H1 (cell line): ENCODE measurements at regions of chr11 and their contacts with region 1.

Region 1: GRCh38 chr11:111777094-111778046 is 11.2 kb upstream of the PPP2R1B start:
- DNase-seq: no peak
- H3K4me3 ChIP-seq: no peak overlapping the region
- H3K27ac ChIP-seq: no peak overlapping the region
- H3K4me1 ChIP-seq: no peaks in the 10 kb centered on the region
- H3K27me3 ChIP-seq: no peaks in the 10 kb centered on the region
- CTCF ChIP-seq: peak in 2 of 3 experiments; percentile 67 to 75; a peak in 3 of 4 replicates
- EP300 ChIP-seq: no peak
- POLR2A ChIP-seq: no peak
- RAD21 ChIP-seq: peak; percentile 89 to 91

Region 2: DNA sequence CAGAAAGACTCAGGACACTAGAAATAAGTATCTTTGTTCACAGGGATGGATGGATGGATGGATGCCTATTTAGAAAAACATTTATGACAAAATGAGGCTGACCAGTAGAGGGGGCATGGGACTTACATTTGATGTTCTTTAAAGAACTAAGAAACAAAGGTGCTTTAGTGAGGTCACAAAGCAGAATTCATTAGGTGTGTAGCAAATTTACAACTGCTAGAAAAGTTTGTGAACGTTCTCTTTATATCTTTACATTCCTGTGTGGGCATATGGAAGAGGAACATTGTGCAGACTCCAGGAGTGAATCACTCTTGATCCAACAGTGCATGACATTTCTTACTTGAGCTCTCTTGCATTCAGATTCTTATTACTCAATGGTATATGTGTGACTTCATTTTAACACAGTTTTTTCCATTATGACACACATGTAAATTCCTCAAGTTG is 191.0 kb before region 1 on chr11:
- CTCF ChIA-PET with region 1: interaction called, 24 read pairs
- POLR2A ChIA-PET with region 1: no interaction called
- DNase-seq: no peak
- H3K4me3 ChIP-seq: no peak overlapping the region
- H3K27ac ChIP-seq: no peak overlapping the region
- H3K4me1 ChIP-seq: peaks cover 0 to 5% (median 0%) of the 10 kb centered on the region in 4 experiments; a peak in 1 of 7 replicates
- H3K27me3 ChIP-seq: no peaks in the 10 kb centered on the region
- CTCF ChIP-seq: peak in 2 of 3 experiments; percentile 37 to 70; a peak in 2 of 4 replicates
- EP300 ChIP-seq: no peak
- POLR2A ChIP-seq: no peak
- RAD21 ChIP-seq: peak; percentile 76 to 78

Region 3: DNA sequence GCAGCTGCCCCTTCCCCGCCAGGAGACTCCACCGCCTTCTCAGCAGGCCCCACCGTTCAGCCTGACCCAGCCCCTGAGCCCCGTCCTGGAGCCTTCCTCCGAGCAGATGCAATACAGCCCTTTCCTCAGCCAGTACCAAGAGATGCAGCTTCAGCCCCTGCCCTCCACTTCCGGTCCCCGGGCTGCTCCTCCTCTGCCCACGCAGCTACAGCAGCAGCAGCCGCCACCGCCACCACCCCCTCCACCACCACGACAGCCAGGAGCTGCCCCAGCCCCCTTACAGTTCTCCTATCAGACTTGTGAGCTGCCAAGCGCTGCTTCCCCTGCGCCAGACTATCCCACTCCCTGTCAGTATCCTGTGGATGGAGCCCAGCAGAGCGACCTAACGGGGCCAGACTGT is 53.8 kb before region 1 on chr11:
- CTCF ChIA-PET with region 1: interaction called, 10 read pairs
- POLR2A ChIA-PET with region 1: no interaction called
- DNase-seq: no peak
- H3K4me3 ChIP-seq: no peak overlapping the region
- H3K27ac ChIP-seq: no peak overlapping the region
- H3K4me1 ChIP-seq: peaks cover 3 to 9% (median 5%) of the 10 kb centered on the region in 4 experiments; a peak in 5 of 7 replicates
- H3K27me3 ChIP-seq: no peaks in the 10 kb centered on the region
- CTCF ChIP-seq: no peak
- EP300 ChIP-seq: no peak
- POLR2A ChIP-seq: no peak
- RAD21 ChIP-seq: no peak

Region 4: DNA sequence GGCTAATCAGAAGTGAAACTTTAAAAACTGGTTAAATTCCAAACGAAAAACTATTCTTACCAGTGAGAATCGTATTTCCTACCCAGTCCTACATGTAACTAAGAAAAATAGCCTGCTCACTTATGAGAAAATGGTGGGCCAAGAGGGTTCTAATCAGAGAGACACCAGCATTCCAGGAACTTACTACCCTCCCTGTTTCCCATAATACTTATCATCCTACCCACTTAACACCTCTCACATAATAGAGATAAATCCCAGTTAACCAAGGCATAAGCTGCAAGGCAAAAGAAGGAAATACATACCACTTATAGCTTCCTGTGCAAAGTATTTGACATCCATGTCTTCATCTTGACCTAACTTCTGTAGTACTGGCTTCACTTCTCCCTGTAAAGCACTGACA is 35.6 kb before region 1 on chr11:
- CTCF ChIA-PET with region 1: interaction called, 10 read pairs
- POLR2A ChIA-PET with region 1: no interaction called
- DNase-seq: no peak
- H3K4me3 ChIP-seq: no peak overlapping the region
- H3K27ac ChIP-seq: no peak overlapping the region
- H3K4me1 ChIP-seq: peaks cover 0 to 10% (median 5%) of the 10 kb centered on the region in 4 experiments; a peak in 5 of 7 replicates
- H3K27me3 ChIP-seq: no peaks in the 10 kb centered on the region
- CTCF ChIP-seq: no peak
- EP300 ChIP-seq: no peak
- POLR2A ChIP-seq: no peak
- RAD21 ChIP-seq: no peak

Region 5: GRCh38 chr11:111766093-111766833 is 11.1 kb before region 1 on chr11 and contains the start of gene PPP2R1B:
- CTCF ChIA-PET with region 1: interaction called, 106 read pairs
- POLR2A ChIA-PET with region 1: interaction called, 25 read pairs
- DNase-seq: peak; percentile 43 to 86
- H3K4me3 ChIP-seq: peak within 1 kb of the TSS; percentile 83 to 97 (median 91)
- H3K27ac ChIP-seq: peak within 1 kb of the TSS; percentile 93
- H3K4me1 ChIP-seq: peaks cover 0 to 9% (median 5%) of the 10 kb centered on the region in 4 experiments; a peak in 4 of 7 replicates
- H3K27me3 ChIP-seq: no peaks in the 10 kb centered on the region
- CTCF ChIP-seq: no peak
- EP300 ChIP-seq: no peak
- POLR2A ChIP-seq: peak in 1 of 2 experiments; percentile 75; a peak in 2 of 3 replicates
- RAD21 ChIP-seq: no peak
- total RNA-seq, gene PPP2R1B: 86.2 and 87.0 TPM in 2 replicates

Region 6: DNA sequence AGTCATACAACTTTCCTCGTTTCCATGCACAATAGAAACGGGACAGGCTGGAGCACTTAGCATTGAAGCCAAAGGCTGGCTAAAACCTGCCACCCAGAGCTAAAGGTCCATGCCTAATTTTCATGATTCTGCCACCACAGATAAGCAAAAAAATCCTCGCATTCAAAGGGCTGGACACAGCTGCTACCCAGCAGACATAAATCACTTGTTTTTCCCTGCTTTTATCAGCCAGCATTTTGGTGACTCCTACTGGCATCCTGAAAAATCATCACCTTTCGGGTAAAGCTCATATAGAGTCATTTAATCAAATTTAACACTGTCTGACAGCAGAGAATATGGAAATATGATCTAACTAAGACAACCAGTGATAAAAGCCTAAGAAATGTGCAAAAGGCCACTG is 56.2 kb after region 1 on chr11:
- CTCF ChIA-PET with region 1: interaction called, 14 read pairs
- POLR2A ChIA-PET with region 1: no interaction called
- DNase-seq: no peak
- H3K4me3 ChIP-seq: no peak overlapping the region
- H3K27ac ChIP-seq: no peak overlapping the region
- H3K4me1 ChIP-seq: no peaks in the 10 kb centered on the region
- H3K27me3 ChIP-seq: no peaks in the 10 kb centered on the region
- CTCF ChIP-seq: peak in 2 of 3 experiments; percentile 14 to 40; a peak in 2 of 4 replicates
- EP300 ChIP-seq: no peak
- POLR2A ChIP-seq: no peak
- RAD21 ChIP-seq: peak; percentile 61 to 64